ENCODE measurements at regions of chr10 and their contacts with region 1.

Region 1: GRCh38 chr10:69914398-69915214 is 112.9 kb downstream of the COL13A1 start:
- DNase-seq: peak; percentile 91

Region 2: GRCh38 chr10:69515699-69516259 is 398.8 kb before region 1 on chr10:
- intact Hi-C with region 1: loop called in 1 of 2 experiments (anchors 1 kb)
- DNase-seq: peak; percentile 88

Region 3: GRCh38 chr10:69644658-69645295 is 269.8 kb before region 1 on chr10:
- intact Hi-C with region 1: loop called (anchors 5 to 10 kb)
- DNase-seq: peak; percentile 85

Region 4: DNA sequence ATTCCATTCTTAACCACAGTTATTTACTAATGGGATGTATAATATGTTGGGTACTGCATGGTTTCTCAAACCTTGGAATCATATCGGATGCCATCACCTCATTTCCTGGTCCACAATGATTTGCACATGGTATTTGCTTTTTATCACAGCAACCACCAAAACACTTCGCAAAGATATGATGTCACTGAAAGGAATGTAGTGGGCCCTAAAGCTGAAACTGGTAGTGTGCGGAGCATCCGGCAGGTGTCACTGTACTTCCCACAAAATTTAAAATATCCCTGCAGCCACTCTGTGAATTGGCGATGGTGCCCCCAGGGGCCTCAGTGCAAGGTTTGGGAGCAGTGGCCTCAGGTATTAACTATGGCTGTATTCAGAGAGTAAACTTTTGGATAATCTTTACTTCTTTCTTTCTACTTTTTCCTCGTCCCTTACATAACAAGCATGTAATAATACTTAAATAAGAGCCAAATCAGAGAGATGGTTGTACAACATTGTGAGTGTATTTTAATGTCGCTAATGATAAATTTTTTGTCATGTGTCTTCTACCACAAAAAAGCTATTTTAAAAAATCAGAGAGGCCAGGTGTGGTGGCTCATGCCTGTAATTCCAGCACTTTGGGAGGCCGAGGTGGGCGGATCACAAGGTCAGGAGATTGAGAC is 218.4 kb before region 1 on chr10:
- intact Hi-C with region 1: loop called in 1 of 2 experiments (anchors 10 kb)
- DNase-seq: no peak

Region 5: GRCh38 chr10:70052462-70053217 is 138.0 kb after region 1 on chr10 and contains the start of gene MACROH2A2:
- intact Hi-C with region 1: no loop called
- DNase-seq: peak; percentile 85
- total RNA-seq, gene MACROH2A2: 5.6 to 6.9 TPM

Measured in posterior vena cava (tissue), 2 donors.